ENCODE measurements at regions of chr1 and their contacts with region 1.

Region 1: GRCh38 chr1:167373398-167373797 is 144.9 kb downstream of the CD247 start:
- DNase-seq: no peak
- ATAC-seq: peak in 3 of 4 donors; percentile 42 to 70 (median 62)
- H3K4me3 ChIP-seq: no peak overlapping the region
- H3K27ac ChIP-seq: no peak overlapping the region
- H3K4me1 ChIP-seq: peaks cover 0 to 9% (median 3%) of the 10 kb centered on the region in 12 donors
- H3K27me3 ChIP-seq: no peaks in the 10 kb centered on the region
- CTCF ChIP-seq: no peak
- POLR2A ChIP-seq: no peak

Region 2: DNA sequence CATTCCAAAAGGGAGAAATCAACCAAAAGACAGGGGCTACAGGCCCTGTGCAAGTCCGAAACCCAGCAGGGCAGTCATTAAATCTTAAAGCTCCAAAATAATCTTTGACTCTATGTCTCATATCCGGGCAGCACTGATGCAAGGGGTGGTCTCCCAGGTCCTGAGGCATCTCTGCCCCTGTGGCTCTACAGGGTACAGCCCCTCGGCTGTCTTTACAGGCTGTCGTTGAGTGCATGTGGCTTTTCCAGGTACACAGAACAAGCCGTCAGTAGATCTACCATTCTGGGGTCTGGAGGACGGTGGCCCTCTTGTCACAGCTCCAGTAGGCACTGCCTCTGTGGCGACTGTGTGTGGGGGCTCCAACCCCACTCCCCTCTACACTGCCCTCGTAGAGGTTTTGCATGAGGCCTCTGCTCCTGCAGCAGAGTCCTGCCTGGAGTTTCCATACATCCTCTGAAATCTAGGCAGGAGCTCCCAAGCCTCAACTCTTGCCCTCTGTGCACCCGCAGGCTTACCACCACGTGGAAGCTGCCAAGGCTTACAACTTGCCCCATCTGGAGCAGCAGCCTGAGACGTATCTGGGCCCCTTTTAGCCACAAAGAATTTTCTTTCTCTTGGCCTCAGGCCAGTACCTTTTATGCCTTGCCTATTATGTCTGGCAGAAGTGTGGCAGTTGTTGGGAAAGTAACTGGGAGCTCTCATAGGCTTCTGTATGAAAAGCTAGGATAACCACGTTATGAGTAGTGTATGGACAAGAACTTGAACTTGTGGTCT is 100.2 kb before region 1 on chr1:
- intact Hi-C with region 1: loop called in 1 of 10 experiments (anchors 10 kb)
- DNase-seq: no peak
- ATAC-seq: peak; percentile 37 to 69 (median 64)
- H3K4me3 ChIP-seq: no peak overlapping the region
- H3K27ac ChIP-seq: no peak overlapping the region
- H3K4me1 ChIP-seq: peaks cover 0 to 40% (median 20%) of the 10 kb centered on the region in 12 donors
- H3K27me3 ChIP-seq: no peaks in the 10 kb centered on the region
- CTCF ChIP-seq: no peak
- POLR2A ChIP-seq: no peak

Region 3: DNA sequence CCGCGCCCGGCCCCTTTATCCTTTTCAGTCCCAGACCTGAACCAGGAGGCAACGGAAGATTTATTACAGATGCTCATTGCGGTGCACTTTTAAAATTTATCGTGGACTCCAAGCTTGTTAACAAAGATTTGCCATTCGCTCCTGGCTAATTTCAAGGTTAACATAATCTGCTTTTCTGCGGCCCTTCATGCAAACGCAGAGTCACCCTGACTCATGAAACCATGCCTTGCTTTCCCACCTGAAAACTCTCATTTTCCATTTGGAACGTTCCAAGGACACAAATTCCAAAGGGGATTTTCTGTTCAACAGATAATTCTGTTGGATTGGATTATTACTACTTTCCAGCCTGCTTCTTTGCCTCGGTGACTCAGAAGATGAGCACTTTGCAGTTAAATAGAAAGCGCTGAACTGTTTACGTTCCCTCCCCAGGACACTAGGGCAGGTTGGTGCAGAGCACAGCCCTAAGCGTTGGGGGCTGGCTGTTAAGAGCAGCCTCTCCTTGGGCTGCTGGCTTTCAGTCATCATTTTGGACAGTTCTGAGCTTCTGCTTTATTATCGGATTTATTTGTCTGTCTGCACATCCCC is 93.8 kb after region 1 on chr1:
- intact Hi-C with region 1: no loop called
- DNase-seq: no peak
- ATAC-seq: no peak
- H3K4me3 ChIP-seq: no peak overlapping the region
- H3K27ac ChIP-seq: no peak overlapping the region
- H3K4me1 ChIP-seq: peaks cover 0 to 8% (median 0%) of the 10 kb centered on the region in 12 donors
- H3K27me3 ChIP-seq: no peaks in the 10 kb centered on the region
- CTCF ChIP-seq: no peak
- POLR2A ChIP-seq: no peak

Region 4: GRCh38 chr1:167890400-167890799 is 517.0 kb after region 1 on chr1:
- intact Hi-C with region 1: no loop called
- DNase-seq: no peak
- ATAC-seq: peak; percentile 27 to 55 (median 33)
- H3K4me3 ChIP-seq: no peak overlapping the region
- H3K27ac ChIP-seq: no peak overlapping the region
- H3K4me1 ChIP-seq: no peaks in the 10 kb centered on the region
- H3K27me3 ChIP-seq: no peaks in the 10 kb centered on the region
- CTCF ChIP-seq: no peak
- POLR2A ChIP-seq: no peak

Measured in heart left ventricle (tissue), 16 donors.